Activated naive CD8-positive, alpha-beta T cell treated with anti-CD3 and anti-CD28 coated beads, Interleukin-2, amount 10 ng/mL, durations not matched to agents 7 days and 5 days (primary cell): ENCODE measurements at regions of chr12 and their contacts with region 1.

Region 1: GRCh38 chr12:53424626-53425514 is 1.2 kb downstream of the AMHR2 start:
- DNase-seq: no peak
- ATAC-seq: no peak
- H3K4me3 Mint-ChIP-seq: no peak overlapping the region
- H3K27ac Mint-ChIP-seq: no peak overlapping the region
- H3K4me1 Mint-ChIP-seq: peaks cover 4% of the 10 kb centered on the region
- H3K27me3 Mint-ChIP-seq: no peaks in the 10 kb centered on the region

Region 2: DNA sequence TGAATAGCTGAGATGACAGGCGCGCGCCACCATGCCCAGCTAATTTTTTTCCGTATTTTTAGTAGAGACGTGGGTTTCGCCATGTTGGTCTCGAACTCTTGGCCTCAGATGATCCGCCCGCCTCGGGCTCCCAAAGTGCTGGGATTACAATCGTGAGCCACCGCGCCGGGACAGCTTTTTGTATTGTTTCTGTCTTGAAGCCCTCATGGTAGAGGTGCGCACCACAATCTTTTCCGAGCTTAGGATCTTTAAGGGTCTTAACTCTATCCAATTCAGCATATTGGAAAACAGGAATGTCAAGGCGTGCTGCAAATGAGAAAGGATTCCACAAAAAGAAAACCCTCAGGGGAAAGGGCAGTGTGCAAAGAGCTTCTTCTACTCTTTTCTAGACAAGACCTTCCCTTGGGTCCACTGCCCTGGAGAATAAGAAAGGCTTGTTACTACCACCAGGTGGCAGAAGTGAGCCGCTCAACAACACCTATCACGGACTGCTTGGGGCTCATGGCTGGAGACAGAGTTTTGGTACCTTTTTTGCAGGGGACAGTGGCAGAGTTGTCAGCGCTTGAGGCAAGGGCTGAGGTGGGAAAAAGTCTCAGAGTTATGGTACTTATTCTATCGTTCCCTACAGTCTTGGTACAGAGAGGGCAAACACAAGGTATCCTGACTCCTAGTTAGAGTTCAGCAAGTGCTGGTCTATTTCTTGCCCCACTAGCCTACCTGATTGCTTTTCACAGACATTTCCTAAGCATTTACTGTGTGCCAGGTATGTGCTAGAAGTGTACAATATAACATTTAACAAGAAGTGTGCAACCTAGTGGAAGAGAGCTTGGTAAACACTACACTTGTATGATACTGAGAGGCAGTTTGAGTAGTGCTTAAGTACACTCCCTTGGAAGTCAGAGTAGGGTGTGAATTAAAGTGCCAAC is 72.3 kb before region 1 on chr12:
- POLR2A ChIA-PET with region 1: interaction called, 11 read pairs
- DNase-seq: peak; percentile 73
- ATAC-seq: peak; percentile 99
- H3K4me3 Mint-ChIP-seq: no peak overlapping the region
- H3K27ac Mint-ChIP-seq: peak overlapping the region; percentile 64
- H3K4me1 Mint-ChIP-seq: peaks cover 11% of the 10 kb centered on the region
- H3K27me3 Mint-ChIP-seq: no peaks in the 10 kb centered on the region